HEK293 (cell line): ENCODE measurements at regions of chr6 and their contacts with region 1.

Region 1: GRCh38 chr6:2353412-2354137 is 108.2 kb upstream of the GMDS start:
- H3K4me3 ChIP-seq: no peak overlapping the region
- H3K27ac ChIP-seq: peak overlapping the region; percentile 52; the same call in 1 of the 2 replicates
- H3K4me1 ChIP-seq: peaks cover 7% of the 10 kb centered on the region
- CTCF ChIP-seq: peak; percentile 48

Region 2: GRCh38 chr6:1806935-1807334 is 546.6 kb before region 1 on chr6:
- CTCF ChIA-PET with region 1: no interaction called
- POLR2A ChIA-PET with region 1: no interaction called
- H3K4me3 ChIP-seq: no peak overlapping the region
- H3K27ac ChIP-seq: no peak overlapping the region
- H3K4me1 ChIP-seq: peaks cover 37% of the 10 kb centered on the region
- CTCF ChIP-seq: no peak

Region 3: GRCh38 chr6:2204272-2204671 is 149.3 kb before region 1 on chr6:
- CTCF ChIA-PET with region 1: interaction called, 49 read pairs
- POLR2A ChIA-PET with region 1: no interaction called
- H3K4me3 ChIP-seq: no peak overlapping the region
- H3K27ac ChIP-seq: no peak overlapping the region
- H3K4me1 ChIP-seq: peaks cover 6% of the 10 kb centered on the region; the same call in 1 of the 2 replicates
- CTCF ChIP-seq: no peak

Region 4: DNA sequence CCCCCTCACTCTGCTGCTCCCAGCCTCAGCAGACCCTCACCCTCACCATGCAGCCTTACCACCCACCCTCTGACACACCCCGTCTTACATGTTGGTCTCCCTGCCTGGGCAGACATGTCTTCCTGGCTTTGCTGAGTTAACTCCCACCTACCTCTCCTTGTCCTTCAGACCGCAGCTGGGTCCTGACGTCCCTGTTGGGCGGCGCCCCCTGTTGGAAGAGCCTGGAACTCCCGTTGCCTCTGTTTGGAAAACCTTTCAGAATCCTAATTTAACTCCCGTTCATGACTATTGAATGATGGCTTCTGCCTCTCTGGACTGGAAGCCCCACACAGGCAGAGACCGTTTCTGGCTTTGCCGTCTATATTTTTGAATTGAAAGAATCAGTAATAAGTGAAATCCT is 152.0 kb after region 1 on chr6:
- CTCF ChIA-PET with region 1: no interaction called
- POLR2A ChIA-PET with region 1: no interaction called
- H3K4me3 ChIP-seq: no peak overlapping the region
- H3K27ac ChIP-seq: no peak overlapping the region
- H3K4me1 ChIP-seq: no peaks in the 10 kb centered on the region
- CTCF ChIP-seq: peak; percentile 67; the same call in 1 of the 2 replicates